CD14-positive monocyte (primary cell): ENCODE measurements at regions of chr10 and their contacts with region 1.

Region 1: GRCh38 chr10:33365871-33366411 is 31.5 kb upstream of the NRP1 start:
- DNase-seq: peak; percentile 78 to 93 (median 88)
- H3K4me3 ChIP-seq: peak overlapping the region in 1 of 3 experiments; percentile 26
- H3K4me3 Mint-ChIP-seq: no peak overlapping the region
- H3K27ac ChIP-seq: peak overlapping the region; percentile 2 to 88
- H3K27ac Mint-ChIP-seq: peak overlapping the region; percentile 90 to 96 (median 96)
- H3K4me1 ChIP-seq: peaks cover 20 to 26% of the 10 kb centered on the region in 2 donors
- H3K4me1 Mint-ChIP-seq: peaks cover 19% of the 10 kb centered on the region
- H3K27me3 ChIP-seq: no peaks in the 10 kb centered on the region
- H3K27me3 Mint-ChIP-seq: peaks cover 0 to 6% (median 0%) of the 10 kb centered on the region in 3 donors
- CTCF ChIP-seq: no peak

Region 2: GRCh38 chr10:33509231-33509831 is 143.4 kb after region 1 on chr10:
- intact Hi-C with region 1: loop called (anchors 10 kb)
- DNase-seq: peak; percentile 79 to 95 (median 94)
- H3K4me3 ChIP-seq: no peak overlapping the region
- H3K4me3 Mint-ChIP-seq: peak overlapping the region in 1 of 2 donors; percentile 37
- H3K27ac ChIP-seq: peak overlapping the region in 1 of 2 donors; percentile 72
- H3K27ac Mint-ChIP-seq: peak overlapping the region; percentile 63 to 91 (median 88)
- H3K4me1 ChIP-seq: peaks cover 37 to 40% of the 10 kb centered on the region in 2 donors
- H3K4me1 Mint-ChIP-seq: peaks cover 27% of the 10 kb centered on the region
- H3K27me3 ChIP-seq: no peaks in the 10 kb centered on the region
- H3K27me3 Mint-ChIP-seq: peaks cover 0 to 3% (median 3%) of the 10 kb centered on the region in 3 donors
- CTCF ChIP-seq: no peak